Mammary epithelial cell (primary cell): ENCODE measurements at regions of chr10 and their contacts with region 1.

Region 1: GRCh38 chr10:73772280-73773151 is 9.3 kb upstream of the CHCHD1 start:
- DNase-seq: peak; percentile 92
- H3K4me3 ChIP-seq: peak overlapping the region; percentile 75 to 92 (median 84)
- H3K27ac ChIP-seq: peak overlapping the region; percentile 76
- H3K4me1 ChIP-seq: peaks cover 30% of the 10 kb centered on the region
- H3K27me3 ChIP-seq: no peaks in the 10 kb centered on the region
- CTCF ChIP-seq: peak in 1 of 2 donors; percentile 5

Region 2: DNA sequence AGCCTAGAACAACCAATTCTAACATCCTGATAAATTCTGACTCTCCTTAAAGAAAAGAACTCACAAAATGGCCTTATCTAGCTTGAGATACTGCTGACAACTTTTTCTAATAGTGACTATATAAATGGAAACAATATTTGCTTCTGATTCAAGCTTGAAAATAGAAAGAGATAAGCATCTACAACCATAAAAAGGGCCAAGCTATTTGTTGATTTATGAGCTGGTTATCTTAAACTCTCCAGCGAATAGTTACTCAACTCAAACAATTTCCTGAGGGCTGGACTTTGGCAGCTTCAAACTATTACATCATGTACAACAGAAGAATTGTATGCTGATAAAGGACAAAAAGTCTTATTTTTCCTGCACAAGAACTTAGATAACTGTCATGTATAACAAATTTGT is 185.9 kb before region 1 on chr10:
- CTCF ChIA-PET with region 1: no interaction called
- dilution Hi-C with region 1: no loop called
- in situ Hi-C with region 1: no loop called
- intact Hi-C with region 1: no loop called
- DNase-seq: peak; percentile 66
- H3K4me3 ChIP-seq: no peak overlapping the region
- H3K27ac ChIP-seq: no peak overlapping the region
- H3K4me1 ChIP-seq: peaks cover 11% of the 10 kb centered on the region
- H3K27me3 ChIP-seq: no peaks in the 10 kb centered on the region
- CTCF ChIP-seq: no peak

Region 3: DNA sequence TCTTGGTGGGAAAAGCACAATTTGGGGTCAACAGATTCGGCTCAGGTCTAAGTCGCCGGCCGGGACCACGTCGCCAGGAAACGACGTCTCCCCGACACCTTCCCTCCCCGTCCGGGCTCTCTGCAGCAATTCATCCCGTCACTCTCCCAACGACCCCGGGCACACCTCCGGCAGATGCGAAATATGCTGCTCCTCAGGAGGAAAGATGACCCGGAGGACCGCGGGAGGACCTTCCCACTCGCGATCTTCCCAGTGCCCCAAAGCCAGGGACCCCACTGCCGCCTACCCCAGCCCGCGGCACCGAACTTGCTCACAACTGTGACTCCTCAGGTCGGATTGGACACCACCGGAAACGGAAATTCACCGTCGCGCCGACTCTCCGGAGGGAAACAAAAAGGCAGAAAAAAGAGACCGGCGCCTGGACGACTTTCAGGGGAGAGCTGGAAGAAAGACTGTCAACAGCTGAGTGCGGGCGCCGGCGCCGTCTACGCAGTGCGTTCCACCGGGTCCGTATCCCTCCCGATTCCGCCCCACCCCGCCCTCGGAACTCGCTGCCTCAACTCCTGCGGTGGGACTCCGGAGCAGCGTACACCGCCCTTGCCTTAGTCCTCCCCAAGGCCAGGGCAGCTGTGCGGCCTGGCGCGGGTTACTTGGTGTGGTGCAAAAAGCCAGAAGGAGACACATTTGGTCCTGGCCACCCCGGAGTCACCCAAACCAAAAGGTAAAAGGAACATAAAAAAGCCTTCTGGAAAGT is 42.2 kb before region 1 on chr10:
- CTCF ChIA-PET with region 1: no interaction called
- dilution Hi-C with region 1: no loop called
- in situ Hi-C with region 1: no loop called
- intact Hi-C with region 1: loop called (anchors 2 kb)
- DNase-seq: peak; percentile 95
- H3K4me3 ChIP-seq: peak overlapping the region; percentile 81 to 94 (median 82)
- H3K27ac ChIP-seq: peak overlapping the region; percentile 68
- H3K4me1 ChIP-seq: peaks cover 4% of the 10 kb centered on the region
- H3K27me3 ChIP-seq: no peaks in the 10 kb centered on the region
- CTCF ChIP-seq: no peak

Region 4: DNA sequence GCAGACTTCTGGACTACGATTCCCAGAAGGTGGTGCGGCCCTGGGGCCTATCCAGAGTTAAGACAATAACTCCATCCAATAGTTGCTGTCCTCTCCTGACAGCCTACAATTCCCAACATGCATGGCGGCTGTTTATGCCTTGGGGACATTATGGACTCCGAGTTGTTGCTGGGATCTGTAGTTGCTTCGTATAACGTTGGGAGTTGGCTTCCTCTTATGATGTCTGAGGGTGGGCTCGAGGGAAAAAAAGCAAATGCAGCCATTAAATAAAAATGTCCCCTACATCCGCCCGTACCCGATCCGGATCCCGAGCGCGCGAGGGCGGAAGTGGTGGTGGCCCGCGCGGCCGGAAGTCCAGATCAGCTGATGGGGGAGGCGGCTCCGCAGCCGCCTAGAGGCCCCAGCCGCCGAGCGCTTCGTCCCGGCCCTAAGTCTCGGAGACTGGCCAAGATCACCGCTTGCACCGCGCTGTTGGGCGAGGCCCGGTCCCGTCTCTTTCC is 12.8 kb after region 1 on chr10 and contains the start of gene ZSWIM8:
- CTCF ChIA-PET with region 1: interaction called, 7 read pairs
- dilution Hi-C with region 1: no loop called
- in situ Hi-C with region 1: no loop called
- intact Hi-C with region 1: loop called (anchors 1 kb)
- DNase-seq: peak; percentile 93
- H3K4me3 ChIP-seq: peak within 1 kb of the TSS; percentile 73 to 92 (median 83)
- H3K27ac ChIP-seq: peak within 1 kb of the TSS; percentile 46
- H3K4me1 ChIP-seq: peaks cover 20% of the 10 kb centered on the region
- H3K27me3 ChIP-seq: no peaks in the 10 kb centered on the region
- CTCF ChIP-seq: no peak
- total RNA-seq, gene ZSWIM8: 62.5 to 67.6 TPM

Region 5: DNA sequence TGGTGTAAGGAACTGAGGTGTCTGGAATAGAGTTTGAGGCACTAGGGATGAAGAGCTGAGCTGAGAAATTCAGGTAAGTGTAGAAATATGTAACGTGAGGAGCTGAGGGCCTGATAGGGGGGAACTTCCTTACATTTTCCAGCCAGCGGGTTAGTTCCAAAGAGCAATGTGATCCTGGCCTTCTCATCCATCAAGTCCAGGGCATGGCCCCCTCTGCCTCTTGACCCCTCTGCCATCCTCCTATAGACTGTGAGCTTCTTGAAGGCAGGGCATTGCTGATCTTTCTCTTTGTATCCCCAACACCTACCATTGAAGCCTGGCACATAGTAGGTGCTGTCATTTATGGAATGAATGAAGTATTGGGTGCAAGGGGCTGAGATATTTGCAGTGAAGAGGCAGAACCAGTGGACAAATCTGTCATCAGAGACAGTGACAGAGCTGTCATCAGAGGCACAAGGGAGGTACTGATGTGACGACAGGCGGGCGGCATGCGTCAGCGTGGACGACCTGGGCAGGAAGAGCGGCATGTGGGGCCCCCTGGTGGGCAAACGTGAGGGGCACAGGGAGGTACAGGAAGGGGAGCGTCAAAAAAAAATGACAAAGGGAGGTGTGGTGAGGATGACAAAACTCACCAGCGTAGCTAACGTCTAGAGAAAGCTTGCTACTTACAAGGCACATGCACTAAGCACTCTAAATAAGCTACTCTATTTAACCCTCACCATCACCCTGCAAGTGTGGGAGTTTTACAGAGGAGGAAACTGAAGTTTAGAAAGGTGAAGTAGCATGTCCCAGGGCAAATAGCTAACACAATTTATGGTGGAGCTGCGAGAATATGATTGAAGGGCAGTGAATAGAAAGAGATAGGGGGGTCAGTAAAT is 107.0 kb after region 1 on chr10:
- CTCF ChIA-PET with region 1: no interaction called
- dilution Hi-C with region 1: no loop called
- in situ Hi-C with region 1: no loop called
- intact Hi-C with region 1: loop called (anchors 1 kb)
- DNase-seq: peak; percentile 80
- H3K4me3 ChIP-seq: no peak overlapping the region
- H3K27ac ChIP-seq: no peak overlapping the region
- H3K4me1 ChIP-seq: peaks cover 29% of the 10 kb centered on the region
- H3K27me3 ChIP-seq: no peaks in the 10 kb centered on the region
- CTCF ChIP-seq: peak; percentile 93 to 94